ENCODE measurements at regions of chr10 and their contacts with region 1.

Region 1: DNA sequence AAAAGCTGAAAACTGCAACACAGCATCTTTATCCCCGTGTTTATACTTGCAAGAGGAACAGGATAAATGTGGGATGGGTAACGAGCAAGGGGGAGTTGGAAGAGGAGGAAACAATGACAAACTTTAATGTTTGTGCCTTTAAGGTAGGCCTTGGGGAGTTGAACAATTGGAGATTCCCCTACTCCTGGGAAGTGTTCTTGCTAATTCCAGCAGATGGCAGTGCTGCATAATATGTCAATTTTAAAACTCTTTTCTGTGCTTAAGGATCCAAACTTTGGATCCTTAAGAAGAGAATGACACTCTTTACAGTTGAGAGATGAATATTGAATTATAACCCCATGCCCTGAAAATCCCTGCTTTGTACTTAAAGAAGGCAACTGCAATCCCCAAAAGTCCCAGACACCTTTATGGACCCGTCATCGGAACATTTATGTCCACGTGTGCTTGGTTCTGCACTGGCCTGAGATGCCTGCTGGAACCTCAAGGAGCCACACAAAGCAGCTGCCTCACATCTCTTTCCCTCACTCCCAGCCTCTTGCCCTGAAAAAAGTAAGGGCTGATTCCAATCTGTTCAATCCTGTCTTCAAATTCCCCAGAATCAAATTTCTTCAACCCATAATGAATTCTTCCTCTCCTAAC is 12.0 kb downstream of the IFIT5 start:
- DNase-seq: peak in 1 of 5 donors; percentile 38
- H3K4me3 ChIP-seq: no peak overlapping the region
- H3K27ac ChIP-seq: no peak overlapping the region
- H3K4me1 ChIP-seq: no peaks in the 10 kb centered on the region
- H3K27me3 ChIP-seq: no peaks in the 10 kb centered on the region
- CTCF ChIP-seq: peak; percentile 26 to 78 (median 75)
- EP300 ChIP-seq: no peak
- POLR2A ChIP-seq: no peak

Region 2: GRCh38 chr10:89241486-89242344 is 184.6 kb before region 1 on chr10:
- intact Hi-C with region 1: no loop called
- DNase-seq: no peak
- H3K4me3 ChIP-seq: no peak overlapping the region
- H3K27ac ChIP-seq: no peak overlapping the region
- H3K4me1 ChIP-seq: no peaks in the 10 kb centered on the region
- H3K27me3 ChIP-seq: no peaks in the 10 kb centered on the region
- CTCF ChIP-seq: no peak
- EP300 ChIP-seq: no peak
- POLR2A ChIP-seq: no peak

Region 3: DNA sequence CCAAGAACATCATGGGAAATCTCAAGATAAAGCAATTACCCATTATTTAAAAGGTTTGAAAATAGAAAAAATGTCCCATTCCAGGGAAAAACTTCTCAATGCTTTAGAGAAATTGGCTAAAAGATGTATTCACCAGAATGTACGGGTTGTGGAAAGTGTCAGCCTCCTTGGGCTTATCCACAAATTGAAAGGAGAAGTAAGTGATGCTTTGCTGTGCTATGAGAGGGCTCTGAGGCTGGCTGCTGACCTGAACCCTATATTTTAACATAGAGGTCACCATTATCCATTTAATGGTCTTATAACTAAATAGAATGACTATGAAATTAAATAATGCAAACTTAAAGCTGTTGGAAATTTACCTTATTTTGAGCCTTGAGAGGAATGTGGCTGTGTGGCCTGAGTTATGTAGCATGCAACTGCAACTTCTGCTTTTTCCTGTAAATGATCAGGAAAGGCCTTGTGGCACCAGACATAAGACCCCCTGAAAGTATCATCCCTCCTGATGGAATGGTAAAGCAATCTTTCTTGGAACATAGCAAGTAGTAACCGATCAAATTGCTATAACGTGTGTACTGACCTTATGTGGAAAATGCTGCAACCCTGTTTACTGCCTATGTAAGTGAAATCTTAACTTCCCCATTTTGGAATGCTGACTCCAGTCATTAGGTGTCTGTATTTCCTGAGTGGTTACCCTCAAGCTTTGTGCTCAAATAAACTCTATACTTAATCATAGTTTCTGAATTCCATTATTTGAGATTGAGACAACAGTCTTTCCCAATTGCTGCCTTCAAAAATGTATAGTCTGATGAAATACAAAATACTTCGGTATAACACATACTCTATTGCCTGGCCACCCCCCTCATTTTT is 41.6 kb before region 1 on chr10:
- intact Hi-C with region 1: no loop called
- DNase-seq: no peak
- H3K4me3 ChIP-seq: no peak overlapping the region
- H3K27ac ChIP-seq: no peak overlapping the region
- H3K4me1 ChIP-seq: no peaks in the 10 kb centered on the region
- H3K27me3 ChIP-seq: no peaks in the 10 kb centered on the region
- CTCF ChIP-seq: no peak
- EP300 ChIP-seq: no peak
- POLR2A ChIP-seq: no peak

Region 4: GRCh38 chr10:89516149-89516832 is 89.9 kb after region 1 on chr10:
- intact Hi-C with region 1: no loop called
- DNase-seq: peak; percentile 44 to 75 (median 60)
- H3K4me3 ChIP-seq: no peak overlapping the region
- H3K27ac ChIP-seq: no peak overlapping the region
- H3K4me1 ChIP-seq: peaks cover 5% of the 10 kb centered on the region
- H3K27me3 ChIP-seq: no peaks in the 10 kb centered on the region
- CTCF ChIP-seq: no peak
- EP300 ChIP-seq: no peak
- POLR2A ChIP-seq: no peak

Region 5: DNA sequence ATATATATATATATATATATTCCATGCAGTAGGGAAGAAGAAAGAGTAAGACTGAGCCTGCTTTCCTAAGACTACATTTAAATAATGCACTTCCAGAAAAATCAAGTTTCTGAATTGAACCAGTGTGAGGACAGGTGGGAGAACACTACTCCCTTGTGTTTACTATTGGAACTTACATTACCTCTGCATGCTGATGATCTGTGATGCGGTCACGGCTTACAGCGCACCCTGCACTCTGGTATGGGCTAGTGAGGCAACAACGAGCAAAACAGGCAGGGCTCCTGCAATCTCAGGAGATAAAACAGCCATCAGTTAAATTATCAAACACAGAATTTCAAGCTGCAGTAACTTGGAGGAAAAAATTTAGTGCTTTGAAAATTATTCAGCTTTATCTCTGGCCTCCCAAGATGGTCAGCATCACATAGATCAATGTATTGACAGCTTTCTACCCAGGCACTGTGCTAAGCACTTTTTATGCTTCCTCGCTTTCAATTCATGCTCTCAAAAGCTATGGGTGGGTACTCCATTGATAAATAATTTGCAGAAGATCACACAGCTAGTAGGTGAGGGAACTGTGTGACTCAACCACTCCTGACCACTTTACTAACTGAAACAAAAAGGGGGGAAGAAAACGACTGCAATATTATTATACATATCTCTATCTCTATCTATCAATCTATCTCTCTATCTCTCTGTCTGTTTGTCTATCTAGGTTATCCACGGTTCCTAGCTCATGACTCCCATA is 129.5 kb after region 1 on chr10:
- intact Hi-C with region 1: loop called in 3 of 4 experiments (anchors 5 kb)
- DNase-seq: no peak
- H3K4me3 ChIP-seq: no peak overlapping the region
- H3K27ac ChIP-seq: no peak overlapping the region
- H3K4me1 ChIP-seq: no peaks in the 10 kb centered on the region
- H3K27me3 ChIP-seq: no peaks in the 10 kb centered on the region
- CTCF ChIP-seq: no peak
- EP300 ChIP-seq: no peak
- POLR2A ChIP-seq: no peak

Region 6: DNA sequence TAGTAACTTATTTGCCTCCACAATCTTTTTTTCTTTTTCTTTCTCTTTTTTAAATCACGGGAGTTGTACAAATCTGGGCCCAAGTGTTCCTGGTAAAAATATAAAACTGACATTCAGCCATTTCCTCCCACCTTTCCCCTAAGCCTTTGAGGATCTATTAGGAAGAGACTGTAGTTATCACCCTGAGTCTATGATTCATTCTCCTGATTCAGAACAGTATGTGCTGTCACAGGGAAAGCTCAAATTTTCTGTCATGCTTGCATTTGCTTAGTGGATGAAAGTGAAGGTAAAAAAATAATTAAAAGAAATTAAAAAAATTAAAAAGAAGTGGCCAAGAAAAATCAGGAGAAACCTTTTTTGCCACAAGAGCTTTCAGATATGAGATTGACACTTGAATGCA is 346.7 kb after region 1 on chr10:
- intact Hi-C with region 1: no loop called
- DNase-seq: no peak
- H3K4me3 ChIP-seq: no peak overlapping the region
- H3K27ac ChIP-seq: no peak overlapping the region
- H3K4me1 ChIP-seq: no peaks in the 10 kb centered on the region
- H3K27me3 ChIP-seq: no peaks in the 10 kb centered on the region
- CTCF ChIP-seq: no peak
- EP300 ChIP-seq: no peak
- POLR2A ChIP-seq: no peak

Measured in ovary (tissue), 10 donors.